Sigmoid colon (tissue), 7 donors: ENCODE measurements at regions of chr17 and their contacts with region 1.

Region 1: GRCh38 chr17:49191917-49192741 is 18.2 kb downstream of the GNGT2 start:
- DNase-seq: peak; percentile 97
- H3K4me3 ChIP-seq: peak overlapping the region; percentile 56 to 88 (median 78)
- H3K27ac ChIP-seq: peak overlapping the region; percentile 87 to 99 (median 96)
- H3K4me1 ChIP-seq: peaks cover 7 to 19% (median 14%) of the 10 kb centered on the region in 4 donors
- H3K27me3 ChIP-seq: no peaks in the 10 kb centered on the region
- CTCF ChIP-seq: peak in 1 of 4 experiments; percentile 10
- EP300 ChIP-seq: no peak
- POLR2A ChIP-seq: no peak

Region 2: GRCh38 chr17:48908047-48908843 is 283.9 kb before region 1 on chr17 and contains the start of gene UBE2Z:
- intact Hi-C with region 1: loop called (anchors 10 kb)
- DNase-seq: peak; percentile 96
- H3K4me3 ChIP-seq: peak within 1 kb of the TSS; percentile 81 to 98 (median 90)
- H3K27ac ChIP-seq: peak within 1 kb of the TSS; percentile 85 to 95 (median 93)
- H3K4me1 ChIP-seq: peaks cover 0 to 46% (median 34%) of the 10 kb centered on the region in 4 donors
- H3K27me3 ChIP-seq: no peaks in the 10 kb centered on the region
- CTCF ChIP-seq: no peak
- EP300 ChIP-seq: no peak
- POLR2A ChIP-seq: peak; percentile 86 to 89
- total RNA-seq, gene UBE2Z: 46.8 to 55.6 (median 51.4) TPM

Region 3: GRCh38 chr17:49227436-49228261 is 35.5 kb after region 1 on chr17:
- intact Hi-C with region 1: loop called (anchors 5 kb)
- DNase-seq: peak; percentile 87
- H3K4me3 ChIP-seq: no peak overlapping the region
- H3K27ac ChIP-seq: no peak overlapping the region
- H3K4me1 ChIP-seq: peaks cover 0 to 38% (median 34%) of the 10 kb centered on the region in 4 donors
- H3K27me3 ChIP-seq: peaks cover 20 to 55% (median 43%) of the 10 kb centered on the region in 3 donors
- CTCF ChIP-seq: peak; percentile 45 to 71 (median 69)
- EP300 ChIP-seq: no peak
- POLR2A ChIP-seq: no peak

Region 4: GRCh38 chr17:49414622-49415350 is 222.7 kb after region 1 on chr17 and contains the start of gene PHB1:
- intact Hi-C with region 1: loop called (anchors 10 kb)
- DNase-seq: peak; percentile 98
- H3K4me3 ChIP-seq: peak within 1 kb of the TSS; percentile 63 to 94 (median 78)
- H3K27ac ChIP-seq: peak within 1 kb of the TSS; percentile 62 to 71 (median 68)
- H3K4me1 ChIP-seq: peaks cover 0 to 20% (median 16%) of the 10 kb centered on the region in 4 donors
- H3K27me3 ChIP-seq: no peaks in the 10 kb centered on the region
- CTCF ChIP-seq: no peak
- EP300 ChIP-seq: no peak
- POLR2A ChIP-seq: no peak
- total RNA-seq, gene PHB1: 70.9 to 105 (median 94.4) TPM